SK-MEL-5 (cell line): ENCODE measurements at regions of chr20 and their contacts with region 1.

Region 1: DNA sequence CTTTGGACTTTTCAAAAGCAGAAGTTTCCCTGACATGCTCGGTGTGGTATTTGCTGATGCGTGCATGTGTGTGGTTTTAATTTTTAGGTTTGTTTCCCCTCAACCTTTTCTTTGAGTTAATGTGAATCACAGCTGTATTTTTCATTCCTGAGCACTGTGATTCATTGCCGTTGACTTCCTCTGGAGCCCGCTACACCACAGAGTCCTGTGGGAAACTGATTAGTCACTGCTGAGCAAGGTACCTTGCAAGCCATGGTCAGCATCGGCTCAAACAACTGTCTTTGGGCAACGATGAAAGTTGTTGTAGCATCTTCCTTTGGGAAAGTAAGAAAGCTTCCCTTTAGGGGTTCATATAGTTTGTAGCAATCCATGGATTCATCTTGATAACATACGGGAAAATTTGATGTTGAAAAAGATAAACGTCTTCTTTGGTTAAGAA is 57.5 kb downstream of the RIN2 start:
- DNase-seq: peak; percentile 60

Region 2: DNA sequence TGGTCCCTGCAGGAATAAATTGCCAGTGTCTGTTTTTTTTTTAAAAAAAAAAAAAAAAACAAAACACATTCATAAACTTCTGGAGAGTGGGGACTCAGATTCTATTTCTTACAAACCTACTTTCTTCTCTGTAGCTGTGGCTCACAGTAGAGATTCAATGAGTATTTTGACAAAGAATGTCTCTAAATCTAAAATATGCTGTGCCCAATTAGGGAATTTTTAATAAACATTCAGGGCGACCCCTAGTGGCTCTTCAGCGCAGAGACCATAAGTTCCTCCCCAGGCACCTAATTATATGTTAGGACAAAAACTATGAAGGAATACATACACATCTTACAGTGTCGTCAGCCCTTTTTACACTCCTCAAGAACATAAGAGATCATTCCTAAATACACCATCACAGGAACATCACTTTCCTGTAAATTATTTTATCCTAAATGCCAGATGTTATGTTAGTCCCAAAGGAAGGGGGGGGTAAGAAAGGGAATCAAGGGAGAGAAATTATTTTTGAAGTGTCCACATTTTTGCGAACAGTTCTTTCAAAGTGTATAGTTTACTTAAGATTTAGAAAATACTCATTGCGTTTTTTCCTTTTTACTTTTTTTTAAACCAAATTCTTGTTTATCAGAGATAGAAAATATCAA is 179.8 kb after region 1 on chr20:
- in situ Hi-C with region 1: loop called (anchors 25 kb)
- DNase-seq: peak; percentile 72

Region 3: DNA sequence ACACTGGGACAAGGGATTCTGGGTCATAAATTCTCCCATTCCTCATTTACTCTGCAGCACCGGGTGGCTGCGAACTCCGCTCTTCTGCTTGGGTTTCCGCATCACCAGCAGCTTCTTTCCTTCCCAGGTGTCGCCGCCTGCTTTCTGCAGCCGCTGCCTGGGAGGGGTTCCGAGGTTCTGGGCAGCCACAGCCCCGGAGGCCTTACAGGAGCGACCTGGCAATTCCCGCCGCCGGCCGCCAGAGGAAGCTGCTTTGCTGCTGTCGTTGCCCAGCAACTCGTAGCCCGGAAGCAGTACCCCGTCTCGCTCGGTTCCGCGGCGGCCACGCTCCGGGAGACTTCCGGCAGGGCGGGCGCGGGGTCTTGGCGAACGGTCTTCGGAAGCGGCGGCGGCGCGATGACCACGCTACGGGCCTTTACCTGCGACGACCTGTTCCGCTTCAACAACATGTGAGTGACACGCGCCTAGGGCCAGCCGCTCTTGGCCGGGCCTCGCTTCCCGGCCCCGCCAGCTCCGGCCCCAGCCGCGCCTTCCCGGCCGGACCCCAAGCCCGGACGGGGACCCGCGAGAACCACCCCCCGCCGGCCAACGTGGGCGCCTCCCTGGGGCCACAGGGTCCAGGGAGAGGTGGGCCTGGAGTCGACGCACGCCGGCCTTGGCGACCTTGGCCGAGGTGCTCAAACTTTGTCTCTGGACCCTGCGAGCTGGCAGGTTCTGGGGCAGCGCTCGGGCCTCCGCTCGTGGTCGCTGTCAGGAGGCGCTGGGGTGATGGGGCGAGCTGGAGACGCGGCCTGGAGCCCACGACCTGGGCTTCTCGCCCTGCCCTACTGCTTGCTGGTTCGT is 201.7 kb after region 1 on chr20 and contains the start of gene NAA20:
- in situ Hi-C with region 1: no loop called
- DNase-seq: peak; percentile 95
- total RNA-seq, gene NAA20: 89.5 and 95.8 TPM in 2 replicates